Dendritic cell treated with granulocyte-macrophage colony-stimulating factor and Interleukin-4, amounts not matched to agents 40 ng/mL and 50 ng/mL, for 4 days (primary cell): ENCODE measurements at regions of chr7 and their contacts with region 1.

Region 1: DNA sequence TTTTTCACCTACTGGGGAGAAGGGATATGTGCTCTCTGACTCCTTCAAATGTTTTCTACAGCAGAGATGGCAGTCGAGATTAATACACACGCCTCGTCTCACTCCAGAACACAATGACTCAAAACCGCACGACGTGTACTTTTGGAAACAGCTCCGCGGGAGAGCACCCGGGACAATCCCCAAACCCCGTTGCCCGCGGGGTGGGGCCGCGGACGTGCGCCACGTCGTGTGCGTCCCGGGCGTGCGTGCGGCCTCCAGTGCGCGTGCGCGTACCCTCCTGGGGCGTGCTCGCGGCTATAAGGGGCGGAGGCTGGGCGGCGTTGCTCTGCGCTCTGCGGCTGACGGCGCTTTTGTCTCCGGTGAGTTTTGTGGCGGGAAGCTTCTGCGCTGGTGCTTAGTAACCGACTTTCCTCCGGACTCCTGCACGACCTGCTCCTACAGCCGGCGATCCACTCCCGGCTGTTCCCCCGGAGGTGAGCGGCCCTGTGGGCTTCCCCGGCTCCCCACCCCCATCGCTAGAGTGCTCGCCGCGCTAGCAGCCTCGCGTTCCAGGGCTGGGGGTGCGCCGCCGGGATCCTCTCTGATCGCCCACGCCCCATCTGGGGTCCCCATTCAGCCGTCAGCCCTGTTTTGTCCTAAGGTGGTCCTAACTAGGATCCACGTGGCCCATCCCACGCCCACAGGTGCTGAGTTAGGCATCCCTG is at the start of gene HILPDA:
- H3K4me3 Mint-ChIP-seq: peak within 1 kb of the TSS; percentile 90
- H3K27ac Mint-ChIP-seq: peak within 1 kb of the TSS; percentile 93
- H3K4me1 Mint-ChIP-seq: peaks cover 48% of the 10 kb centered on the region
- H3K27me3 Mint-ChIP-seq: no peaks in the 10 kb centered on the region

Region 2: DNA sequence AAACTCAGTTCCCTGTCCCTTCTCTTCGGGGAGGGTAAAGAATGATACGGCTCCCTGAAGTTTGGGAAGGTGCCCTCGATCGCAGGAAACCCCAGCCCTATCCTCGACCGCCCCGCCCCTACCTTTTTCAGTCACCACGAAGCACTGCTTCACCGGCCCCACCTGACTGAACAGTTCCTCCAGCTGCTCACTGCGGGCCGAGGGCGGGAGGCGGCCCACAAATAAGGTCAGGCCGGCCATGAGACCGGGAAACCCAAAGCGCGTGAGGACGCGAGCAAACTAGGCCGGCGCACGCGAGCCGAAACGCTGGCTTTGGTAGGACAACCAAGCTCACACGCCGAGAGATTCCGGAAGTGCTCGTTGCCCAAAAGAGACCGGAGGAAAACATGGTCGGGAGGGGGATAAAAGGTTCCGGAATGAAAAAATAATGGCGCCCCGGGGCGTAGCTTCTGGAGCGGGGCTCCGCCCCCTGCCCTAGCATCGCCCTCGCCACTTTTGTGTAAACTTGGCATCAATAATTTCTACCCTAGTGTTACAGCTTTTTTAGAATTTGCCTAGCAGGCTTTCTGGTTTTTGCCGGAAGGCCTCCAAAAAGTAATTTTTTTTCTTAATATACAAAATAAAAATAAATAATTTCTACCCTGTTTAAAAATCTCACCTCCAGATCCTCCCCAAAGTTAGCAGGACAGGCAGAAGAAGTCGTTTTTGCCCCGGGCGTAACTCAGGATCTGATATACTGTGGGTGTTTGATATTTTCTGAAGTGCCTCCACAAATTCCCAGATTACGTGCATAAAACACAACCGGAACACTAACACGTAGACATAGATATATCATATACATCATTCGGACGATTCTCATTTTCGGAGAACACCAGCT is 111.9 kb before region 1 on chr7 and contains the start of gene RBM28:
- intact Hi-C with region 1: loop called (anchors 10 kb)
- H3K4me3 Mint-ChIP-seq: peak within 1 kb of the TSS; percentile 95
- H3K27ac Mint-ChIP-seq: peak within 1 kb of the TSS; percentile 97
- H3K4me1 Mint-ChIP-seq: peaks cover 14% of the 10 kb centered on the region
- H3K27me3 Mint-ChIP-seq: peaks cover 7% of the 10 kb centered on the region

Region 3: GRCh38 chr7:128398016-128398840 is 57.5 kb before region 1 on chr7:
- intact Hi-C with region 1: loop called (anchors 2 kb)
- H3K4me3 Mint-ChIP-seq: no peak overlapping the region
- H3K27ac Mint-ChIP-seq: no peak overlapping the region
- H3K4me1 Mint-ChIP-seq: peaks cover 13% of the 10 kb centered on the region
- H3K27me3 Mint-ChIP-seq: no peaks in the 10 kb centered on the region

Region 4: GRCh38 chr7:128437426-128438332 is 18.0 kb before region 1 on chr7:
- intact Hi-C with region 1: loop called (anchors 2 kb)
- H3K4me3 Mint-ChIP-seq: peak overlapping the region; percentile 54
- H3K27ac Mint-ChIP-seq: peak overlapping the region; percentile 90
- H3K4me1 Mint-ChIP-seq: peaks cover 29% of the 10 kb centered on the region
- H3K27me3 Mint-ChIP-seq: no peaks in the 10 kb centered on the region